ENCODE measurements at regions of chr6 and their contacts with region 1.

Region 1: DNA sequence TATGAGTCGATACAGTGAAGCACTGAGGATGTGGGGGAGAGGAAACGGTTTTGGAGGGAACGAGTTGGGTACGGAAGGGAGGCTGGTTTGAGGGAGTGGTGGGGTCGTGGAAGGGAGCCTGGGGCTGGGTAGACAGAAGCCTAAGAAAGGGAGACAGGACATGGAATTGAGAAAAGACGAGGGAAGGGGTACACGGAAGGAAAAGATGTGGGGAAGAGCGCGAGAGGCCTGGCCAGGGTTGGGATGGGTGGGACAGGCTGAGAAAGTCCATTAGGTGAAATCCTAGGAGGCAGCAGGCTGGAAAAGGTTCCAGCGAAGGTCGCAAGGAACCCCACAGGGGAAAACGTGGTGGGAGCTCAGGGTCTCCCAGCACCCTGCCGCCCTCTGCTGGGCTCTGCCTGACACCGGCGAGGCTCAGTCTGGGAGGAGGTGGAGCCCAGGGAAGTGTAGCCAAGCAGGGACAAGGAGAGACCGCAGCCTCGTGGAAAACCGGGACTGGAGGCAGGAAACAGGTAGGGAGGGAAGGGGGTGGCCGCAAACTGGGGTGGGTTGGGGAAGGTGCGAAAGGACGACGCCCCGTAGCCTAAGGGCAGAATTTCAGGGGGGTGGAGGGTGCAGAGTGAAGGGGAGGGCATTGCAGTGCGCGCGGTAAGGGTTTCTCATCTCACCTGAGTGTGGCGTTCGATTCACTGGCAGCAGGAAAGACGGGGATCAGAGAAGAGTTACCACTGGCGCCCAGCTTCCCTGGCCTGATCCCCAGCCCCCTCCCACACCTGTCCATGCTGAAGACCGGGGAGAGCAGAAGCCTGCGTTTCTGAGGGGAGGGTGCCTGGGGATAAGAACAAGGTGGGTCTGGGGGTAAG is 4.3 kb downstream of the GABBR1 start:
- DNase-seq: peak; percentile 78 to 86 (median 85)
- H3K4me3 ChIP-seq: peak overlapping the region; percentile 56
- H3K27ac ChIP-seq: peak overlapping the region; percentile 47 to 78
- H3K4me1 ChIP-seq: peaks cover 11% of the 10 kb centered on the region
- H3K27me3 ChIP-seq: no peaks in the 10 kb centered on the region
- CTCF ChIP-seq: peak; percentile 45 to 67 (median 59)
- EP300 ChIP-seq: no peak
- POLR2A ChIP-seq: peak; percentile 10

Region 2: DNA sequence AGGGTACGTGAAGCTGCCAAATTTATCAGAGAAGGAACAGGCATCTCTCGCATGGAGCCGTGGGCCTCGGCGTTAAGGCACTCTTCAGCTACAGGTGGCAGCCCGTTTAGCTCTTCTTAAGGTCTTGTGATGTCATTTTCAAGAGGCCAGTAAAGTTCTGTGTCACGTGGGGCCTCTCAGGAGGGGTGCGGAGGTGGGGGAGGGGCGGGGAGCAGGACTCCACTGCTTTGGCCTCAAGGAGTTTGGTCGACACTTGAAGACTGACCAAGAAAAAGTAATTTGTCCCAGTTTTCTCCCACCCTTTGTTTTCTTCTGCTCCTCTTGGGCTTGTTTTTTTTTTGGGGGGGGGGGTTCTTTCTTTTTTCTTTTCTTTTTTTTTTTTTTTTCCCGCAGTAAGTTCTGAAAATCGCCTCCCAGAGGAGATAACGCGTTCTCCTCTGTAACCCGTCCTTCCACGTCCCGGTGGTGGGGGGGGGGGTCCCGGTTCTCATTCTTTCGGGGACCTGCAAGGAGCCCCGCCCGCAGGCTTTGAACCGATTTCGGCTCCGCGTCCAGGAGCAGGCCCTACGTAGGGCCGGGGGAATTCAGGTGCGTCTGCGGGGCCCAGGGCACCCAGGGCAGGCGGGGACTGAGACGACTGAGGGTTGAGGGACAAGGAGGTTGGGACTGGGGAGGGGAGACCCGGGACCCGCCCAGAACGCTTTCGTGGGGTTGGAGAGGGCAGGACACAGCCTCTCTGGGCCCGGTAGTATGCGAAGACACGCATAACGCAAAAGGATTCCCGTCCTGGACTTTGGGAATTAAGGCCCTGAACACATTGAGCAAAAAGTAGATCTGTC is 1139.1 kb before region 1 on chr6:
- intact Hi-C with region 1: loop called in 1 of 4 experiments (anchors 5 kb)
- DNase-seq: peak; percentile 81 to 90 (median 86)
- H3K4me3 ChIP-seq: peak overlapping the region; percentile 43
- H3K27ac ChIP-seq: peak overlapping the region; percentile 80 to 84
- H3K4me1 ChIP-seq: peaks cover 1% of the 10 kb centered on the region
- H3K27me3 ChIP-seq: no peaks in the 10 kb centered on the region
- CTCF ChIP-seq: no peak
- EP300 ChIP-seq: no peak
- POLR2A ChIP-seq: peak; percentile 42

Region 3: DNA sequence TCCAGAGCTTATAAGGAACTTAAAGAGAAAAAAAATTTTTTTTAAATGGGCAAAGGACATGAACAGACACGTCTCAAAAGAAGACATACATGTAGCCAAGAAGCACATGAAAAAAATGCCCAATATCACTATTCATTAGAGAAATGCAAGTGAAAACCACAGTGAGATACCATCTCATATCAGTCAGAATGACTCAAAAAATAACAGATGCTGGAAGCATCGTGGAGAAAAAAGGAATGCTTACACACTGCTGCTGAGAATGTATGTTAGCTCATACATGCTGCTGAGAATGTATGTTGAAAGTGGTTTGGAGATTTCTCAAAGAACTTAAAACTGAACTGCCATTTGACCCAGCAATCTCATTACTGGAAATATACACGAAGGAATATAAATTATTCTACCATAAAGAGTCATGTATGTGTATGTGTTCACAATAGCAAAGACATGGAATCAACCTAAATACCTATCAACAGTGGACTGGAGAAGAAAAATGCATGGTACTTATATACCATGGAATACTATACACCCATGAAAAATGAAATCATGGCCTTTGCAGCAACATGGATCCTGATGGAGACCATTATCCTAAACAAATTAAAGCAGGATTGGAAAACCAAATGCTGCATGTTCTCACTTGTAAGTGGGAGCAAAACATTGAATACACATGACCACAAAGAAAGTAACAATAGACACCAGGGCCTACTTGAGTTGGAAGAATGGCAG is 177.0 kb before region 1 on chr6:
- intact Hi-C with region 1: no loop called
- DNase-seq: no peak
- H3K4me3 ChIP-seq: no peak overlapping the region
- H3K27ac ChIP-seq: no peak overlapping the region
- H3K4me1 ChIP-seq: no peaks in the 10 kb centered on the region
- H3K27me3 ChIP-seq: no peaks in the 10 kb centered on the region
- CTCF ChIP-seq: no peak
- EP300 ChIP-seq: no peak
- POLR2A ChIP-seq: no peak

Region 4: DNA sequence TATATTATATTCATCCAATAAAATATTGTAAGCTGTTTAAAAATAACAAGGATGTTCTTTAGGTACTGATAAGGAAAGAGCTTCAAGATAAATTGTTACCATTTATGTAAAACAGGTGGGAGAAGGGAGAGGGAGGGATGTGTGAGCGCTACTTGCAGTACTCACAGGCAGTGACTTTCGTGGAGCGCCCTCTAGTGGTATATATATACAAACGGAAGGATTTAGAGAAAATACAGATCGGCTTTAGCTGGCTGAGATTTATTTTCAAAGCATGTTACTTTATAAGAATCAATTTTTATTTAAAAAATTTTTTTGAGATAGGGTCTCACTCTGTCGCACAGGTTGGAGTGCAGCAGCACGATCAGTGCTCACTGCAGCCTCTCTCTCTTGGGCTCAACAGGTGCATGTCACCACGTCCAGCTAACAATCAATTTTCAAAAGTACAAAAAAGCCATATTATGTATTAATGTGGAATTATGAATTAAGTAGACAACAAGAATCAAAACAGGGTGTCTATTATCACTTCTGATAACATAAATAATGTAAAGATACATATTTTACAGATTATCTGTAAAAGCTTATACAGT is 24.9 kb after region 1 on chr6:
- intact Hi-C with region 1: no loop called
- DNase-seq: peak in 3 of 5 donors; percentile 17 to 41 (median 39)
- H3K4me3 ChIP-seq: no peak overlapping the region
- H3K27ac ChIP-seq: no peak overlapping the region
- H3K4me1 ChIP-seq: no peaks in the 10 kb centered on the region
- H3K27me3 ChIP-seq: no peaks in the 10 kb centered on the region
- CTCF ChIP-seq: peak in 2 of 3 donors; percentile 37 to 64
- EP300 ChIP-seq: no peak
- POLR2A ChIP-seq: no peak

Measured in ovary (tissue), 10 donors.